ENCODE measurements at regions of chr2 and their contacts with region 1.

Region 1: GRCh38 chr2:229539628-229540027 is 174.7 kb downstream of the DNER start:
- DNase-seq: peak; percentile 61
- H3K4me3 ChIP-seq: no peak overlapping the region
- H3K27ac ChIP-seq: no peak overlapping the region
- H3K4me1 ChIP-seq: no peaks in the 10 kb centered on the region
- H3K27me3 ChIP-seq: no peaks in the 10 kb centered on the region
- CTCF ChIP-seq: no peak

Region 2: DNA sequence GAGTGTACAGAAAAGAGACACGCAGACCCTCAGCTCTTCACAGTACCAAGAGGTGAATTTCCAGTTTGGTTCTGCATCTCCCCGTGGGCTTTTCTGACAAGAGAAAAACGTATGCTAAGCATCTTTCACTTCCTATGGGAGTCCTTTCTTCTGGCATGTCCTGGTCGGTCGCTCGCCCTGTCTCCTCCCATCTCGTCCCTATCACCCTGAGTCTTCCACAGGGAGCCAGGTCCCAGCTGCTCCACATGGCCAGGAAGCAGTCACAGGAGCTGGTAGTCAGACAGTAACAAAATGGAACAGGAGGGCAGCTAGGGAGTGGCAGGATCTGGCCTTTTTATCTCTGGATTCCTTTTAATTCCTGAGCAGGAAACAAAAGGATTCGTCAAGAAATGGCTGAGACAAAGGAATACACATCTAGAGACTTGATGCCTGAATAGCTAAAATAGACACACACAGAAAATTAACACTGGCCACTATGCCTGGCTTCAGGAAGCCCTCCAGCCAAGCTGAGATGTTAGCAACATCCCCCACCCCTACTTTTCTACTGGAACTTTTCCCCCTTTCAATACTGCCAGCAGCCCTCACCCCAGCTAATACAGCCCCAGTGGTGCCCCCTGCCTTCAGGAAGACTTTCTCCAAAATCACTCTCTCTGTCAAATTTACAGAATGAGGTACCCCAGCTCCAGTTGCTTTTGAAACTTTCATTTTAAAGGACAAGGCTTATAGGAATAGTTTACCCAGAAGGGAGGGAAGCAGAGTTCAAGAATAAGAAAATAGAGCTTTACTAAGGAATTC is 38.6 kb after region 1 on chr2:
- CTCF ChIA-PET with region 1: no interaction called
- dilution Hi-C with region 1: loop called (anchors 5 kb)
- in situ Hi-C with region 1: no loop called
- intact Hi-C with region 1: no loop called
- DNase-seq: no peak
- H3K4me3 ChIP-seq: no peak overlapping the region
- H3K27ac ChIP-seq: no peak overlapping the region
- H3K4me1 ChIP-seq: no peaks in the 10 kb centered on the region
- H3K27me3 ChIP-seq: no peaks in the 10 kb centered on the region
- CTCF ChIP-seq: peak in 1 of 2 donors; percentile 4

Measured in mammary epithelial cell (primary cell).